WTC11 (cell line): ENCODE measurements at regions of chr11 and their contacts with region 1.

Region 1: GRCh38 chr11:72238040-72238450 is 5.9 kb downstream of the PHOX2A start:
- DNase-seq: peak; percentile 94
- ATAC-seq: peak; percentile 81
- H3K4me3 Mint-ChIP-seq: peak overlapping the region; percentile 73
- H3K27ac Mint-ChIP-seq: no peak overlapping the region
- H3K4me1 Mint-ChIP-seq: peaks cover 31% of the 10 kb centered on the region
- H3K27me3 Mint-ChIP-seq: peaks cover 46% of the 10 kb centered on the region
- CTCF ChIP-seq: peak; percentile 84

Region 2: GRCh38 chr11:72150882-72151281 is 87.2 kb before region 1 on chr11:
- CTCF ChIA-PET with region 1: no interaction called
- POLR2A ChIA-PET with region 1: no interaction called
- DNase-seq: no peak
- ATAC-seq: no peak
- H3K4me3 Mint-ChIP-seq: no peak overlapping the region
- H3K27ac Mint-ChIP-seq: no peak overlapping the region
- H3K4me1 Mint-ChIP-seq: no peaks in the 10 kb centered on the region
- H3K27me3 Mint-ChIP-seq: no peaks in the 10 kb centered on the region; the same call in 1 of the 2 replicates
- CTCF ChIP-seq: no peak

Region 3: GRCh38 chr11:72179804-72180396 is 58.1 kb before region 1 on chr11:
- CTCF ChIA-PET with region 1: interaction called, 18 read pairs
- POLR2A ChIA-PET with region 1: no interaction called
- DNase-seq: no peak
- ATAC-seq: no peak
- H3K4me3 Mint-ChIP-seq: no peak overlapping the region
- H3K27ac Mint-ChIP-seq: no peak overlapping the region
- H3K4me1 Mint-ChIP-seq: no peaks in the 10 kb centered on the region
- H3K27me3 Mint-ChIP-seq: peaks cover 15% of the 10 kb centered on the region
- CTCF ChIP-seq: no peak

Region 4: GRCh38 chr11:72222907-72223614 is 15.0 kb before region 1 on chr11:
- CTCF ChIA-PET with region 1: interaction called, 123 read pairs
- POLR2A ChIA-PET with region 1: interaction called, 37 read pairs
- DNase-seq: peak; percentile 96
- ATAC-seq: peak; percentile 72
- H3K4me3 Mint-ChIP-seq: peak overlapping the region; percentile 73
- H3K27ac Mint-ChIP-seq: peak overlapping the region; percentile 80
- H3K4me1 Mint-ChIP-seq: peaks cover 29% of the 10 kb centered on the region
- H3K27me3 Mint-ChIP-seq: peaks cover 7% of the 10 kb centered on the region; the same call in 1 of the 2 replicates
- CTCF ChIP-seq: no peak

Region 5: GRCh38 chr11:72333661-72334060 is 95.6 kb after region 1 on chr11:
- CTCF ChIA-PET with region 1: interaction called, 14 read pairs
- POLR2A ChIA-PET with region 1: no interaction called
- DNase-seq: peak; percentile 69
- ATAC-seq: peak; percentile 99
- H3K4me3 Mint-ChIP-seq: no peak overlapping the region
- H3K27ac Mint-ChIP-seq: peak overlapping the region; percentile 43; the same call in 1 of the 2 replicates
- H3K4me1 Mint-ChIP-seq: peaks cover 13% of the 10 kb centered on the region
- H3K27me3 Mint-ChIP-seq: no peaks in the 10 kb centered on the region
- CTCF ChIP-seq: no peak

Region 6: GRCh38 chr11:72352859-72353551 is 115.0 kb after region 1 on chr11:
- CTCF ChIA-PET with region 1: interaction called, 15 read pairs
- POLR2A ChIA-PET with region 1: no interaction called
- DNase-seq: peak; percentile 47
- ATAC-seq: peak; percentile 79
- H3K4me3 Mint-ChIP-seq: no peak overlapping the region
- H3K27ac Mint-ChIP-seq: no peak overlapping the region
- H3K4me1 Mint-ChIP-seq: peaks cover 5% of the 10 kb centered on the region
- H3K27me3 Mint-ChIP-seq: no peaks in the 10 kb centered on the region
- CTCF ChIP-seq: no peak